Panc1 (cell line): ENCODE measurements at regions of chr15 and their contacts with region 1.

Region 1: DNA sequence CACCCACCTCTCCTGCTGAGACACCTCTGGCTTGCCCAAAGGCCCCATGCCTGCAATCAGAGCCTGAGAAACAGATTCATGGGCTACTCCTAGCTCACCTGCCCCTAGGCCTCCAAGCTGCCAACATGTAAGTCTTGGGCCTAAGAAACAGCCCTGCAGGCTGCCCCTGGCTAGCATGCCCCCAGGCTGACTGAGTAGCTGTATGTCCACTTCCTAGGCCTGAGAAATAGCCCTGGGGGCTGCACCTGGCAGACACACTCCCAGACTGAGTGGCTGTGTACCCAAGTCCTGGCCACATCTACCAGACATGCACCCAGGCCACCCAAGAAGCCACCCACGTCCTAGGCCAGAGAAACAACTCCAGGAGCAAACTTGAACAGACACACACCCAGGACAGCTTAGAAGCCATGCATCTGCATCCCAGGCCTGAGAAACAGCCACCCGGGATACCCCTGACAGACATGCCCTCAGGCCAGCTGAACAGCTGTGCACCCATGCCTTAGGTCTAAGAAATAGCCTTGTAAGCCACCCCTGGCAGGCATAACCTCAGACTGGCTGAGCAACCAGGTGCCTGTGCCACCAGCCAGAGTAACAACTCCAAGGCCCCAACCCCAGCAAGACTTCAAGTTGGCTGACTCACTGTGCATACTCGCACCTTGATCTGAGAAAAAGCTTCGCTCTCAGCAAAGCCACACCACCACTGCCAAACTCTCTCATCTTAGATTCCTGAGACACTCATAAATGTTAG is 12.0 kb upstream of the NRG4 start:
- DNase-seq: no peak
- ATAC-seq: no peak
- H3K4me3 ChIP-seq: no peak overlapping the region
- H3K27ac ChIP-seq: no peak overlapping the region
- H3K4me1 ChIP-seq: no peaks in the 10 kb centered on the region
- H3K27me3 ChIP-seq: no peaks in the 10 kb centered on the region
- CTCF ChIP-seq: no peak

Region 2: GRCh38 chr15:75891895-75892294 is 132.3 kb before region 1 on chr15:
- CTCF ChIA-PET with region 1: no interaction called
- POLR2A ChIA-PET with region 1: no interaction called
- in situ Hi-C with region 1: no loop called
- intact Hi-C with region 1: no loop called
- DNase-seq: no peak
- ATAC-seq: peak; percentile 73
- H3K4me3 ChIP-seq: no peak overlapping the region
- H3K27ac ChIP-seq: no peak overlapping the region
- H3K4me1 ChIP-seq: no peaks in the 10 kb centered on the region
- H3K27me3 ChIP-seq: no peaks in the 10 kb centered on the region
- CTCF ChIP-seq: no peak

Region 3: DNA sequence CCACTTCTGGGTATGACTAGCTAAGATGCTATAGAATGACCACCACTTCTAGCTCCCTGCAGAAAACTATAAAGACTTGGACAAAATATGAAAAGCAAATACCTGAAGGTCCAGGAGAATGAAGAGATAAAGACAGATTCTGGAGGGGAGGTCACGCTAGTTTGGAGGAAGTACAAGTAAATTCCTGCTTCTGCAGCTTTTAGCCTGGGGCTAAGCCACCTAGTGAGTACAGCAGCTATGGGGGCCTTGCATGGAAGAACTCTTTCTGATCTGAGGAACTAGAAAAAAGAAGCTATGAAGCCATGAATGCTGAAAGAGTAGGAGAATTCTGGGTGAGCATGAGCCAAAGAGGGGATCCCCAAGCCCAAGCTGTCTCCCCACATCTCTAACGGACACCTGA is 41.7 kb before region 1 on chr15:
- CTCF ChIA-PET with region 1: no interaction called
- POLR2A ChIA-PET with region 1: no interaction called
- in situ Hi-C with region 1: no loop called
- intact Hi-C with region 1: no loop called
- DNase-seq: no peak
- ATAC-seq: no peak
- H3K4me3 ChIP-seq: no peak overlapping the region
- H3K27ac ChIP-seq: no peak overlapping the region
- H3K4me1 ChIP-seq: no peaks in the 10 kb centered on the region
- H3K27me3 ChIP-seq: peaks cover 17% of the 10 kb centered on the region
- CTCF ChIP-seq: no peak

Region 4: GRCh38 chr15:75994220-75994619 is 30.0 kb before region 1 on chr15:
- CTCF ChIA-PET with region 1: no interaction called
- POLR2A ChIA-PET with region 1: no interaction called
- in situ Hi-C with region 1: no loop called
- intact Hi-C with region 1: no loop called
- DNase-seq: no peak
- ATAC-seq: no peak
- H3K4me3 ChIP-seq: no peak overlapping the region
- H3K27ac ChIP-seq: no peak overlapping the region
- H3K4me1 ChIP-seq: no peaks in the 10 kb centered on the region
- H3K27me3 ChIP-seq: peaks cover 6% of the 10 kb centered on the region; the same call in 1 of the 2 replicates
- CTCF ChIP-seq: no peak

Region 5: DNA sequence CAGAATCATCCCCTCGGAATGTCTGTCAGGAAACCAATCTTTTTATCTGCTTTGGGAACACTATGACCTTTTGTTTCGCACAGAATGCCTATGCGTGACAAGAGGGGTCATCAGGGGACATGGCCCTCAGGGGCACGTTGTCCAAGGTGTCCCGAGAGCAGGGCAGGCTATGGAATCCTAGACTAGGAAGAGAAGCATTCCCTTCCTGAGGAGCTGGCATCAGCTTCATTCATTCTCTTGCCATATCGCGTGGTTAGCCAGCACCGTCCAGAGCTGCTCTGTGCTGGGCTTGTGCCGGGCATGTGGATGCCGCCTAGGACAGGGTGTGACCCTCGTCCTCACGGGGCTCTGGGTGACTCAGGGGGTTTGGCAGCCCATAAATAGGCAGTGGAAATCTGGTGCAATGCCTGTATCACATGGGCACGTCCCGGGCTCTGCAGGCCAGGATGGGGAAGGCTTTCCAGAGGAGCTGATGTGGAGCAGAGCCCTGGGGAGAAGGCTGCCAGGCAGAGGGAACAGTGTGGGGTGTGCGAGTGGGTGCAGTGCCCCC is 153.4 kb after region 1 on chr15:
- CTCF ChIA-PET with region 1: no interaction called
- POLR2A ChIA-PET with region 1: no interaction called
- in situ Hi-C with region 1: no loop called
- intact Hi-C with region 1: no loop called
- DNase-seq: no peak
- ATAC-seq: peak; percentile 67
- H3K4me3 ChIP-seq: no peak overlapping the region
- H3K27ac ChIP-seq: no peak overlapping the region
- H3K4me1 ChIP-seq: no peaks in the 10 kb centered on the region
- H3K27me3 ChIP-seq: no peaks in the 10 kb centered on the region
- CTCF ChIP-seq: no peak

Region 6: GRCh38 chr15:76206325-76206976 is 182.3 kb after region 1 on chr15:
- CTCF ChIA-PET with region 1: no interaction called
- POLR2A ChIA-PET with region 1: interaction called, 11 read pairs
- in situ Hi-C with region 1: no loop called
- intact Hi-C with region 1: no loop called
- DNase-seq: no peak
- ATAC-seq: no peak
- H3K4me3 ChIP-seq: no peak overlapping the region
- H3K27ac ChIP-seq: no peak overlapping the region
- H3K4me1 ChIP-seq: no peaks in the 10 kb centered on the region
- H3K27me3 ChIP-seq: no peaks in the 10 kb centered on the region
- CTCF ChIP-seq: no peak